Heart left ventricle (tissue), 16 donors: ENCODE measurements at regions of chr1 and their contacts with region 1.

Region 1: DNA sequence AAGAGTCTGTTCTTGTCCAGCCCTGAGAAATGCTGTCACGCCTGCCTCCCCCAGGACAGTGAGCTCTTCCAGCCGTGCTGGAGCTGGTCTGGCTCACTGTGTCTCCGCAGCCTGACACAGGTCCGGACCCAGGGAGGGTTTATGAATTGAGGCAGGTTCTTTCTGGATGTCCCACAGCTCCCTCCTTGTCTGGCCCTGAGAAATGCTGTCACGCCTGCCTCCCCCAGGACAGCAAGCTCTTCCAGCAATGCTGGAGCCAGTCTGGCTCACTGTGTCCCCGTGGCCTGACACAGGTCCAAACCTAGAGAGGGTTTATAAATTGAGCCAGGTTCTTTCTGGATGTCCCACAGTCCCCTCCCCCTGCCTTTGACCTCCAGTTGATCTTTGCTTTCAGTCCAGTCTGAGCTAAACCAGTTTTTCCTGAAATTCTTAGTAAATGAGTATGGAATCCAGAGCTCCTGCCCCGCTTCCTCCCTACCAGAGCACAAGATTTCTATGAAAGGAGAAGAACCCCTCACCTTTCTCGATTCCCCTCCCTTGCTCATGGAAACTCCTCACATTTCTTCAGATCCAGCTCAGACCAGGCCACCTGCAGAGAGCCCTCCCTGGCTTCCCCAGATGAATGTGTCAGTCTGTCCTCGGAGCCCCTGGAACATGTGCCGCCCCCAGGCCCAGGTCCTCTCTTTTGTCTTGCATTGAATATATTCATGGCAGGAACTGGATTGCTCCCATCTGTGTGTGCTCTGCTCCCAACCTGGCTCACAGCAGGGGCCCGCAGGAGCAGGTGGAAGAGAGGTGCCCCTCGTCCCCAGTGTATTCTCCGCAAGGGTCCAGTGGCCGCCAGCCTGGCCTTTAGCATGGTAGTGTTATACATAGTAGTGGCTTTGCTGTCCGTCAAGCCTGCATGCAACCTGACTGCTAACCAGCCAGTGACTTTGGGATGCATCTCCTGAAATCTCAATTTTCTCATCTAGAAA is 116.3 kb downstream of the EPHB2 start:
- DNase-seq: peak in 4 of 5 donors; percentile 37 to 71 (median 68)
- ATAC-seq: peak; percentile 73 to 89 (median 84)
- H3K4me3 ChIP-seq: no peak overlapping the region
- H3K27ac ChIP-seq: peak overlapping the region in 11 of 12 donors; percentile 2 to 79 (median 64)
- H3K4me1 ChIP-seq: peaks cover 0 to 32% (median 19%) of the 10 kb centered on the region in 12 donors
- H3K27me3 ChIP-seq: no peaks in the 10 kb centered on the region
- CTCF ChIP-seq: no peak
- POLR2A ChIP-seq: no peak

Region 2: DNA sequence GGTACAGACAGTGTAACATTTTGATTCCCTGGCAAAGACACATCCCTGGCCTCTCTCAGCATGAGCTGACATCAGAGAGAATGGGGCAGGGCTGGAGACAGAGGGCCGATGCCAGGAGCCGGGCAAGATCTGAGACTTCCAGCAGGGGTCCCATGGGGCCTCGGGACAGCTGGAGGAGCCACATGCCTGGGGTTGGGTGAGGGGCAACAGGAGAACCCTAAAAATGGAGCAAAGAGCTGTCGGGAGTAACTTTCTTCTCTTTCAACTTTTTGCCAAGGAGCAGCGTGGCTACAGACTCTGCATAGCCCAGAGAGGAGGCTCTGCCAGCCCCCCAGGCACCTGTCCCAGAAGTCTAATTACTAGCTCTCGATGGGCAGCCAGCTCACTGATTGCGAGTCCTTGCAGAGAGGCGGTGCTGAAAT is 15.0 kb after region 1 on chr1:
- intact Hi-C with region 1: loop called in 1 of 10 experiments (anchors 2 kb)
- DNase-seq: peak; percentile 33 to 69 (median 55)
- ATAC-seq: peak; percentile 74 to 83 (median 79)
- H3K4me3 ChIP-seq: no peak overlapping the region
- H3K27ac ChIP-seq: peak overlapping the region in 1 of 12 donors; percentile 33
- H3K4me1 ChIP-seq: peaks cover 0 to 11% (median 2%) of the 10 kb centered on the region in 12 donors
- H3K27me3 ChIP-seq: peaks cover 0 to 2% (median 0%) of the 10 kb centered on the region in 9 donors
- CTCF ChIP-seq: no peak
- POLR2A ChIP-seq: no peak

Region 3: DNA sequence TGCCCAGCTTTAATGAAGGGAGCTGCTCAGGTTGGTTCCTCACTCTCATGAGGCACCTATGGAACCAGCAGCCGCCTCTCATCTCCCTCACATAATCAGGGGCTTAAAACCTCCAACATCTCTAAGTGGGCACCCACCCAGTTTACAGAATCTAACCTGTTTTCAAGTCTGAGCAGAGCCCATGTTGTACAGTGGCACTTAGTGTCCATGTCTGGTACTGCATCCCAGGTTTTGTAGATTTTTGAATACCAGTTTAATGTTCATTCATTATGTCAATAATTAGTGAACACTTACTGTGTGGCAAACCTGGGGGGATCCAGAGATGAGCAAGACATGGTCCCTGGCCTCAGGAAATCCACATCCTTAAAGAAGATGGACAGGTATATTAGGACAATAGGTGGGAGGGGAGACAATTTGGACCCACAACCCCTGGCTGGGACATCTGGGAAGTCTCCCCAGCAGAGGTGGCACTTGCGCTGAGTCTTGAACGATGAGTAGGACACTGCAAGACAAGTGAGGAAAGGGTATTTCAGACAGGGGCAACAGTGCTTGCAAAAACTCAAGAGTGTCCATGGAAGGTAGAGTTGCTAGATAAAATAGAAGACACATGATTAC is 62.4 kb after region 1 on chr1:
- intact Hi-C with region 1: loop called in 1 of 10 experiments (anchors 5 kb)
- DNase-seq: no peak
- ATAC-seq: peak in 2 of 4 donors; percentile 38 to 64
- H3K4me3 ChIP-seq: no peak overlapping the region
- H3K27ac ChIP-seq: no peak overlapping the region
- H3K4me1 ChIP-seq: peaks cover 0 to 7% (median 0%) of the 10 kb centered on the region in 12 donors
- H3K27me3 ChIP-seq: peaks cover 0 to 10% (median 0%) of the 10 kb centered on the region in 9 donors
- CTCF ChIP-seq: peak; percentile 60 to 79 (median 69)
- POLR2A ChIP-seq: no peak